ENCODE measurements at regions of chr12 and their contacts with region 1.

Region 1: GRCh38 chr12:106136263-106136662 is 2.5 kb downstream of the NUAK1 start:
- DNase-seq: peak; percentile 89
- H3K4me3 ChIP-seq: no peak overlapping the region
- H3K27ac ChIP-seq: no peak overlapping the region
- H3K4me1 ChIP-seq: no peaks in the 10 kb centered on the region
- H3K27me3 ChIP-seq: peaks cover 24% of the 10 kb centered on the region
- CTCF ChIP-seq: peak; percentile 87

Region 2: GRCh38 chr12:105420659-105421240 is 715.5 kb before region 1 on chr12:
- CTCF ChIA-PET with region 1: interaction called, 14 read pairs
- POLR2A ChIA-PET with region 1: no interaction called
- intact Hi-C with region 1: loop called (anchors 1 kb)
- DNase-seq: peak; percentile 71
- H3K4me3 ChIP-seq: no peak overlapping the region
- H3K27ac ChIP-seq: no peak overlapping the region
- H3K4me1 ChIP-seq: no peaks in the 10 kb centered on the region
- H3K27me3 ChIP-seq: no peaks in the 10 kb centered on the region
- CTCF ChIP-seq: peak; percentile 89

Region 3: DNA sequence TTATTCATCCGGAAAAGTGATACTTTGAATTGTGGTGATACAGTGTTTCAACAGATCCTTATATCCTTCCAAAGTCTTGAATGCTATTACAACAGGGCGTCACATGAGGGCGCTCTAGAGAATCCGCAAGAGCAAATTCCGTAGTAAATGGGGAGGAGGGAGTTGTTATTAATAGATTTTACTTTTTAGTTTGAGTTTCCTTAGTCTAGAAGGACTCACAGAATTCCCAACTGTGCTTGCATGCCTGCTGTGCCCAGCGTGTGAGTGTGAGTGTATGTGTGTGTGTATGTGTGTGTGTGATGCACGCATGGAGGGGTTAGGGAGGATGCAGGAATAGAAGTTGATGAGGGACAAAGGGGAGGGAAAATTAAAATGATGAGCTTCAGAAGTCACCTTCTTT is 430.5 kb before region 1 on chr12:
- CTCF ChIA-PET with region 1: no interaction called
- POLR2A ChIA-PET with region 1: no interaction called
- intact Hi-C with region 1: loop called (anchors 1 kb)
- DNase-seq: peak; percentile 64
- H3K4me3 ChIP-seq: no peak overlapping the region
- H3K27ac ChIP-seq: no peak overlapping the region
- H3K4me1 ChIP-seq: no peaks in the 10 kb centered on the region
- H3K27me3 ChIP-seq: no peaks in the 10 kb centered on the region
- CTCF ChIP-seq: peak; percentile 92

Region 4: GRCh38 chr12:106149096-106149784 is 13.0 kb after region 1 on chr12:
- CTCF ChIA-PET with region 1: interaction called, 12 read pairs
- POLR2A ChIA-PET with region 1: no interaction called
- intact Hi-C with region 1: no loop called
- DNase-seq: peak; percentile 22
- H3K4me3 ChIP-seq: no peak overlapping the region
- H3K27ac ChIP-seq: no peak overlapping the region
- H3K4me1 ChIP-seq: no peaks in the 10 kb centered on the region
- H3K27me3 ChIP-seq: no peaks in the 10 kb centered on the region
- CTCF ChIP-seq: peak; percentile 69

Measured in A673 (cell line).